K562 (cell line): ENCODE measurements at regions of chr15 and their contacts with region 1.

Region 1: DNA sequence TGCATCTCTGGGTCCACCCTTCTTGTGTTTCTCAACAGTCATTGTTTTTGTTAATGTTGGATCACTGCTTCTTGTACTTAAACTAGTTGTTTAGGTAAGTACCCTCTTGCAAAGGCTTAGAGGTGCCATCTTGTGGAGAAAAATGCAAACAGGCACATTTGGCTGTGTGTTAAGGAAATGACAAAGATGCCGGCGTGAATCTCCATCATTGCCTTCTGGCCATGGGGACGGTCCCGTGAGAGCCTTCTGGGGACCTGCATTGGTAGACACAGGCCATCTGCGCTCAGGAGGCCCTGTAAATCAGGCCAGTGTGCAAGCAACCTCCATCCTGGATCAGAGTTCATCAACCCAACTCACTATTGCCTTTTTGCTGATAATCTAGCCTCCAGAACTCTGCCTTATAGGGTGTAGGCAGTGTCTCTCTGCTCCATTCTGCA is 158.6 kb upstream of the NR2E3 start:
- DNase-seq: peak in 1 of 4 experiments; percentile 30
- ATAC-seq: peak; percentile 64
- H3K4me3 ChIP-seq: no peak overlapping the region
- H3K27ac ChIP-seq: no peak overlapping the region
- H3K4me1 ChIP-seq: no peaks in the 10 kb centered on the region; a peak in 1 of 5 replicates
- H3K27me3 ChIP-seq: peaks cover 0 to 4% of the 10 kb centered on the region in 2 experiments; a peak in 1 of 5 replicates
- CTCF ChIP-seq: peak; percentile 41 to 57 (median 47); a peak in 4 of 6 replicates
- EP300 ChIP-seq: no peak
- POLR2A ChIP-seq: no peak
- RAD21 ChIP-seq: peak; percentile 55 to 57

Region 2: GRCh38 chr15:71532994-71533393 is 118.8 kb before region 1 on chr15:
- CTCF ChIA-PET with region 1: no interaction called
- POLR2A ChIA-PET with region 1: no interaction called
- in situ Hi-C with region 1: no loop called
- intact Hi-C with region 1: loop called (anchors 5 kb)
- DNase-seq: peak; percentile 25 to 66 (median 56)
- ATAC-seq: peak; percentile 67
- H3K4me3 ChIP-seq: no peak overlapping the region
- H3K27ac ChIP-seq: no peak overlapping the region
- H3K4me1 ChIP-seq: no peaks in the 10 kb centered on the region
- H3K27me3 ChIP-seq: 0 out of 5 replicates have a peak, but pooled peaks cover 0 to 4% of the 10 kb centered on the region in 2 experiments
- CTCF ChIP-seq: peak; percentile 62 to 69 (median 67)
- EP300 ChIP-seq: no peak
- POLR2A ChIP-seq: no peak
- RAD21 ChIP-seq: peak; percentile 31 to 54; a peak in 3 of 4 replicates

Region 3: GRCh38 chr15:71575474-71576045 is 76.2 kb before region 1 on chr15:
- CTCF ChIA-PET with region 1: no interaction called
- POLR2A ChIA-PET with region 1: no interaction called
- in situ Hi-C with region 1: no loop called
- intact Hi-C with region 1: loop called (anchors 1 kb)
- DNase-seq: no peak
- ATAC-seq: 0 out of 3 replicates have a peak, but pooled peaks have one; percentile 50
- H3K4me3 ChIP-seq: no peak overlapping the region
- H3K27ac ChIP-seq: no peak overlapping the region
- H3K4me1 ChIP-seq: no peaks in the 10 kb centered on the region
- H3K27me3 ChIP-seq: no peaks in the 10 kb centered on the region; a peak in 1 of 5 replicates
- CTCF ChIP-seq: peak; percentile 14 to 53 (median 28); a peak in 4 of 6 replicates
- EP300 ChIP-seq: no peak
- POLR2A ChIP-seq: no peak
- RAD21 ChIP-seq: peak in 1 of 2 experiments; percentile 46; a peak in 3 of 4 replicates

Region 4: GRCh38 chr15:72117486-72118399 is 466.0 kb after region 1 on chr15 and contains the start of gene MYO9A:
- CTCF ChIA-PET with region 1: no interaction called
- POLR2A ChIA-PET with region 1: no interaction called
- in situ Hi-C with region 1: no loop called
- intact Hi-C with region 1: no loop called
- DNase-seq: peak; percentile 97 to 98 (median 98)
- ATAC-seq: peak; percentile 88
- H3K4me3 ChIP-seq: peak within 1 kb of the TSS; percentile 60
- H3K27ac ChIP-seq: peak within 1 kb of the TSS; percentile 95
- H3K4me1 ChIP-seq: peaks cover 5 to 17% of the 10 kb centered on the region in 2 experiments; a peak in 2 of 5 replicates
- H3K27me3 ChIP-seq: no peaks in the 10 kb centered on the region
- CTCF ChIP-seq: peak in 1 of 3 experiments; percentile 29; a peak in 2 of 6 replicates
- EP300 ChIP-seq: no peak
- POLR2A ChIP-seq: no peak
- RAD21 ChIP-seq: no peak
- polyA plus RNA-seq, gene MYO9A: 1.9 to 2.7 TPM